ENCODE measurements at regions of chr7 and their contacts with region 1.

Region 1: DNA sequence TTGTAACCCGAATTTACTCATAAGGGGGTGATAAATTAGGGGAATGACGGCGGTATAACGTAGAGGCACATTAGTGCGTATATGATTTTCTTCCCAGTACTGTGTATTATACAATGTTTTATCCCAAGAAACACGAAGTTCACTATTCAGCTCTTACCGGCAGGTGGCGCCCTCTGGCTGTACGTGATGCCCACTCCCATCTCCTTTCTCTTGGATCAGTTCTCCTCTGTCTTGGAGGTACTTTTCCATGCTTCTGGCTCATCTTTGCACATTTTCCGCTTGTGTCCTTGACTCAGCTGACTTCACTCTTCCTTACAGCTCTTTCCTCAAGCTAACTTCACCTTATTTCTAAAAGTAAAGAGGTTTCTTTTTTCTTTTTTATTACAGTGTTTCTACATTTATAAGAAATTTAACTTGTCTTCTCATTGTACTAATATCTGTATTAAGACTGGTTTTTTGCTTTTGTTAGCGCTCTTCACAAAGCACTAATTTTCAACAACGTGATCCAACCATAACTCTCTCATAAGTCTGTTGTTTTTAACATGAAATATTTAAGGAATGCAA is 21.3 kb downstream of the TMEM176B start:
- DNase-seq: peak; percentile 63 to 73
- ATAC-seq: peak; percentile 95 to 99
- H3K4me3 ChIP-seq: no peak overlapping the region
- H3K27ac ChIP-seq: no peak overlapping the region
- H3K4me1 ChIP-seq: 0 out of 3 replicates have a peak, but pooled peaks cover under 1% of the 10 kb centered on the region
- CTCF ChIP-seq: peak; percentile 88
- EP300 ChIP-seq: no peak
- POLR2A ChIP-seq: no peak
- RAD21 ChIP-seq: peak; percentile 76 to 80

Region 2: GRCh38 chr7:150793569-150794238 is 14.9 kb after region 1 on chr7:
- CTCF ChIA-PET with region 1: interaction called, 13 read pairs
- POLR2A ChIA-PET with region 1: no interaction called
- DNase-seq: no peak
- ATAC-seq: no peak
- H3K4me3 ChIP-seq: no peak overlapping the region
- H3K27ac ChIP-seq: no peak overlapping the region
- H3K4me1 ChIP-seq: no peaks in the 10 kb centered on the region
- CTCF ChIP-seq: no peak
- EP300 ChIP-seq: no peak
- POLR2A ChIP-seq: no peak
- RAD21 ChIP-seq: no peak

Region 3: GRCh38 chr7:150876817-150877526 is 98.2 kb after region 1 on chr7:
- CTCF ChIA-PET with region 1: interaction called, 23 read pairs
- POLR2A ChIA-PET with region 1: no interaction called
- DNase-seq: peak; percentile 76 to 85
- ATAC-seq: peak; percentile 79 to 92; a peak in 5 of 6 replicates
- H3K4me3 ChIP-seq: no peak overlapping the region
- H3K27ac ChIP-seq: no peak overlapping the region
- H3K4me1 ChIP-seq: no peaks in the 10 kb centered on the region
- CTCF ChIP-seq: peak; percentile 41
- EP300 ChIP-seq: no peak
- POLR2A ChIP-seq: no peak
- RAD21 ChIP-seq: peak in 1 of 2 experiments; percentile 25; a peak in 1 of 5 replicates

Measured in A549 (cell line).